Left colon (tissue), 2 donors: ENCODE measurements at regions of chr7 and their contacts with region 1.

Region 1: DNA sequence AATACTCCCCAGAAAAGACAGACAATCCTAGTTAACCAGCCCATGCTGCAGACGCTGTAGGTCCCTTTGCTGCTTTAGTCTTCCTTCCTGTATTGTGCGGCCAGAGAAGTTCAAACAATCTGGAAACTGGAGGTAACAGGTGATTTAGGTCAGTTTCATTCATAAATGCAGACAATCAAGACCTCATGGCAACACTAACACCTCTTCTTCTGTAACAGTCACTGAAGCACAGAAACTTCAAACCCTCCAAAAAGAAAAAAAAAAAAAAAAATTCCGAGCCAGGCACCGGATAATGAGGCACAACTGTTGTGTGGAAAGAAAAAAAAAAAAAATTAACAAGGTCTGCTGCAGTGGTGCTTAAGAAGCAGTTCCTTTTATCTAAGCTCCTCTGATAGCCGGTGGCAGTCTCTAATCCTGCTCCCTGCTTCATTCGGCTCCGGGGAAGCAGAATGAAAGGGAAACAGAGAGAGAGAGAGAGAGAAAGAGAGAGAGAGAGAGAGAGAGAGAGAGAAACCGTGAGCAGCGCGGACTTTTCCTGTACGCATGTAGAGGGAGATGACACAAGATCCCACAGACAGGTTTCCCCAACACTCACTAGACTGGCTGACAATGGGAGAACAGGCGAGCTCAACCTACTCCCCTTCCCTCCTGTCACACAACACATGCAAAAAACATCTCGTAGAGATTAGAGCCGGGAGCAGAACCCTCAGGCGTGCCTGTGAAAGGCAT is at the start of gene SEMA3A:
- DNase-seq: peak; percentile 6 to 31
- ATAC-seq: peak; percentile 62
- total RNA-seq, gene SEMA3A: 3.4 to 12.6 TPM

Region 2: DNA sequence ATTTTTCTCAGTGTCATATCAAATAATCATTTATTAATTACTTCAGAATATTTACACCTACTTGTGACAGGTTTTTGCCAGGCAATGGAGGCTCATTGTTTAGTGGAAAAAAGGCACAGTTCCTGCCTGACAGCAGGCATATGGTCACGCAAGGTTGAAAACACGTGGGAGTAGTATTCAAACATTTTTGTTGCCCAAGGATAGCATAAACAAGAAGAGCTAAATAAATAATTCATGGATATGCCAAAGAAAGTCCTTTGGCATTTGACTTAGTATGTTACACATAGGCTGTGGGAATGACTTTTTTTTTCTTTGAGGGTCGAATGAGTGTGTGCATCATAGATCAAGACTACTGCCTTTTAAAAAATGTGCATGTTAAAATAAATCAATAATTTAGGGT is 425.3 kb before region 1 on chr7:
- intact Hi-C with region 1: no loop called
- DNase-seq: no peak
- ATAC-seq: no peak

Region 3: GRCh38 chr7:83976295-83976694 is 218.4 kb before region 1 on chr7:
- intact Hi-C with region 1: loop called in 1 of 2 experiments (anchors 10 kb)
- DNase-seq: no peak
- ATAC-seq: peak; percentile 70